ENCODE measurements at regions of chr1 and their contacts with region 1.

Region 1: DNA sequence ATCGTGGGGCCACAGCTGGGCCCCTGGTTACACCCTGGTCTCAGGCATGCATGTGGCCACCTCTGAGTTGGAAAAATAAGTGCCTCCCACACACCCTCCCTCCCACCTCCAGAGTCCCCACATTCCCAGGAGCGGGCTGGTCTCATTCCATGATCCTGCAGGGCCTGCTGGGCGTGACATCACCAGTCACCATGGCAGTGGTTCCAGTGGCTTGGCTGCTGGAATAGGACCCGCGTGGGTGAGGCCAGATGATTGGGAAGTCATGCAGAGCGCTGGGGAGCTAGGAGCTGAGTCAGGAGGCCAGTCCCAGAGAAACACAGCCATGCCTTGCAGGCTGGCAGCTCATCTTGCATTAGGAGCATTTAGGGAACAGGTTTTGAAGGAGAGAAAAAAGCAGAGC is 125.4 kb upstream of the TMEM51 start:
- DNase-seq: no peak
- ATAC-seq: no peak
- H3K4me3 ChIP-seq: no peak overlapping the region
- H3K27ac ChIP-seq: no peak overlapping the region
- H3K4me1 ChIP-seq: no peaks in the 10 kb centered on the region
- H3K27me3 ChIP-seq: no peaks in the 10 kb centered on the region
- CTCF ChIP-seq: no peak
- EP300 ChIP-seq: no peak
- POLR2A ChIP-seq: no peak
- RAD21 ChIP-seq: no peak

Region 2: DNA sequence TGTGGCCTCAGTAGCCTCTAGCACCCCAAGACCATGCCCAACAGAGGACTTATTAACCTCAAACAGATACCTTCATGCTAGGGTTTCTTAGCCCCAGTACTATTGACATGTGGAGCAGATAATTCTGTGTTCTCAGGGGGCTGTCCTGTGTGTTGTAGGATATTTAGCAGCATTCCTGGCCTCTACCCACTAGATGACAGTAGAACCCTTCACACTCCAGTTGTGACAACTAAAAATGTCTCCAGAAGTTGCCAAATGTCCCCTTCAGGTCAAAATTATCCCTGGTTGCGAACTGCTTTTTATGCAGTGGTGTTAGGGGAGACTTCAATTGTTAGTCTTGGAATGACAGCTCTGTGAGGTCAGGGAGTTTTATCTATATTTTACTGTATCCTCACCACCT is 421.5 kb before region 1 on chr1:
- CTCF ChIA-PET with region 1: interaction called, 12 read pairs
- POLR2A ChIA-PET with region 1: no interaction called
- RAD21 ChIA-PET with region 1: interaction called, 3 read pairs
- SMC1A ChIA-PET with region 1: no interaction called
- in situ Hi-C with region 1: no loop called
- intact Hi-C with region 1: loop called (anchors 5 kb)
- DNase-seq: no peak
- ATAC-seq: peak; percentile 38; the same call in 1 of the 3 replicates
- H3K4me3 ChIP-seq: no peak overlapping the region
- H3K27ac ChIP-seq: no peak overlapping the region
- H3K4me1 ChIP-seq: no peaks in the 10 kb centered on the region
- H3K27me3 ChIP-seq: no peaks in the 10 kb centered on the region
- CTCF ChIP-seq: peak; percentile 32 to 62 (median 48); a peak in 5 of 6 replicates
- EP300 ChIP-seq: no peak
- POLR2A ChIP-seq: no peak
- RAD21 ChIP-seq: peak; percentile 70

Region 3: DNA sequence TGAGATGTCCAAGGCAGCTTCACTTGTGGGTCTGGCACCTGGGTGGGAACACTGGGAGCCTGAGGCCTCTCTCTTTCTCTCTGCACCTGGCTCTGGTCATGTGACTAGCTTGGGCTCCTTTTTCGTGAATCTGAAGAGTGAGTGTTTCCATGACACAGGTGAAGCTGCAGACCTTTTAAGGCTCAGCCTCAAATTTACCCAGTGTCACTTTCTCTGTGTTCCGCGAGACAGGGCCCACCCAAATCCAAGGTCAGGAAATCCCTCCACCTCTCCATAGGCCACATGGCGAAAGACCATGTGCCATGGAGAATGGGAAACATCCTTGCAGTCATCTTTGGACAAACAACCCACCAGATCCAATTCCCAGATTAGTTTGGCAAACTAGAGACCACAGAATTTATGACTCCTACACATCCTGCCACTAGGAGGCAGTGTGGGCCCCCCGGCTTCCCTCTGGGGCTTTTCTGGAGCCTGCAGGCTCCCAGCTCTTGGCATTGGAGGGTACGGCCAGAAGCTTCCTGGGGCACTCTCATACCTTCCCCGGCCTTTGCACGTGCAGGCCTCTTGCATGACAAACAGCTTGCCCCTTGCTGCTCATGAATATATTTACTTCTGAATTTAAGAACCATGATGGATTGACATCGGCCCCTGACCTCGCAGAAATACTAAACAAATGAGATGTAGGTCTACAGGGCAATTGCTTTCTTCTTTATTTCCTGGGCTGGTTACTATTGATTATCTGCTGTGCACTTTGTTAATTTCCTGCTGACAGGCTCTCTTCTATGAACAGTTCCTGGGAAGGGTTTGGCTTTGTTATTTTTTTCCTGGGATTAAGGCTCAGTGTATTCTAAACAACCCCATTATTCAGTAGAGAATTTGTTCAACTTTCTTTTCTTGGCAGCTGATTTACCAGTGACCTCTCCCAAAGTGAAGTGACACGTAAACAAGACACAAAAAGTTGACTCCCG is 248.9 kb before region 1 on chr1:
- CTCF ChIA-PET with region 1: interaction called, 26 read pairs
- POLR2A ChIA-PET with region 1: no interaction called
- RAD21 ChIA-PET with region 1: interaction called, 10 read pairs
- SMC1A ChIA-PET with region 1: interaction called, 8 read pairs
- in situ Hi-C with region 1: no loop called
- intact Hi-C with region 1: loop called (anchors 5 kb)
- DNase-seq: no peak
- ATAC-seq: peak; percentile 48; the same call in 1 of the 3 replicates
- H3K4me3 ChIP-seq: no peak overlapping the region
- H3K27ac ChIP-seq: no peak overlapping the region
- H3K4me1 ChIP-seq: no peaks in the 10 kb centered on the region
- H3K27me3 ChIP-seq: no peaks in the 10 kb centered on the region
- CTCF ChIP-seq: peak; percentile 49 to 75 (median 73)
- EP300 ChIP-seq: no peak
- POLR2A ChIP-seq: no peak
- RAD21 ChIP-seq: peak; percentile 55

Region 4: GRCh38 chr1:15038232-15039016 is 10.3 kb after region 1 on chr1:
- CTCF ChIA-PET with region 1: interaction called, 11 read pairs
- POLR2A ChIA-PET with region 1: no interaction called
- RAD21 ChIA-PET with region 1: no interaction called
- SMC1A ChIA-PET with region 1: no interaction called
- in situ Hi-C with region 1: no loop called
- intact Hi-C with region 1: no loop called
- DNase-seq: no peak
- ATAC-seq: peak; percentile 76
- H3K4me3 ChIP-seq: no peak overlapping the region
- H3K27ac ChIP-seq: no peak overlapping the region
- H3K4me1 ChIP-seq: no peaks in the 10 kb centered on the region
- H3K27me3 ChIP-seq: no peaks in the 10 kb centered on the region
- CTCF ChIP-seq: peak; percentile 32 to 42 (median 35); a peak in 5 of 6 replicates
- EP300 ChIP-seq: no peak
- POLR2A ChIP-seq: no peak
- RAD21 ChIP-seq: no peak

Measured in GM12878 (cell line).